OCI-LY7 (cell line): ENCODE measurements at regions of chr3 and their contacts with region 1.

Region 1: GRCh38 chr3:180912304-180913296 is at the start of gene FXR1:
- DNase-seq: peak; percentile 96
- H3K4me3 ChIP-seq: peak within 1 kb of the TSS; percentile 98
- H3K27ac ChIP-seq: peak within 1 kb of the TSS; percentile 82
- H3K4me1 ChIP-seq: peaks cover 24% of the 10 kb centered on the region
- CTCF ChIP-seq: peak; percentile 72
- total RNA-seq, gene FXR1: 90.6 and 142 TPM in 2 replicates

Region 2: GRCh38 chr3:180989291-180990163 is 76.9 kb after region 1 on chr3 and contains the start of gene DNAJC19:
- CTCF ChIA-PET with region 1: interaction called, 3 read pairs
- POLR2A ChIA-PET with region 1: interaction called, 11 read pairs
- intact Hi-C with region 1: loop called (anchors 1 kb)
- DNase-seq: peak; percentile 96
- H3K4me3 ChIP-seq: peak within 1 kb of the TSS; percentile 76
- H3K27ac ChIP-seq: peak within 1 kb of the TSS; percentile 34
- H3K4me1 ChIP-seq: peaks cover 10% of the 10 kb centered on the region
- CTCF ChIP-seq: no peak
- total RNA-seq, gene DNAJC19: 29.8 and 58.6 TPM in 2 replicates

Region 3: GRCh38 chr3:181009225-181009624 is 96.6 kb after region 1 on chr3:
- CTCF ChIA-PET with region 1: no interaction called
- POLR2A ChIA-PET with region 1: no interaction called
- intact Hi-C with region 1: no loop called
- DNase-seq: no peak
- H3K4me3 ChIP-seq: no peak overlapping the region
- H3K27ac ChIP-seq: no peak overlapping the region
- H3K4me1 ChIP-seq: no peaks in the 10 kb centered on the region
- CTCF ChIP-seq: no peak

Region 4: GRCh38 chr3:181486141-181486885 is 573.7 kb after region 1 on chr3:
- CTCF ChIA-PET with region 1: no interaction called
- POLR2A ChIA-PET with region 1: no interaction called
- intact Hi-C with region 1: loop called (anchors 10 kb)
- DNase-seq: peak; percentile 7
- H3K4me3 ChIP-seq: no peak overlapping the region
- H3K27ac ChIP-seq: peak overlapping the region; percentile 89
- H3K4me1 ChIP-seq: peaks cover 61% of the 10 kb centered on the region
- CTCF ChIP-seq: no peak

Region 5: DNA sequence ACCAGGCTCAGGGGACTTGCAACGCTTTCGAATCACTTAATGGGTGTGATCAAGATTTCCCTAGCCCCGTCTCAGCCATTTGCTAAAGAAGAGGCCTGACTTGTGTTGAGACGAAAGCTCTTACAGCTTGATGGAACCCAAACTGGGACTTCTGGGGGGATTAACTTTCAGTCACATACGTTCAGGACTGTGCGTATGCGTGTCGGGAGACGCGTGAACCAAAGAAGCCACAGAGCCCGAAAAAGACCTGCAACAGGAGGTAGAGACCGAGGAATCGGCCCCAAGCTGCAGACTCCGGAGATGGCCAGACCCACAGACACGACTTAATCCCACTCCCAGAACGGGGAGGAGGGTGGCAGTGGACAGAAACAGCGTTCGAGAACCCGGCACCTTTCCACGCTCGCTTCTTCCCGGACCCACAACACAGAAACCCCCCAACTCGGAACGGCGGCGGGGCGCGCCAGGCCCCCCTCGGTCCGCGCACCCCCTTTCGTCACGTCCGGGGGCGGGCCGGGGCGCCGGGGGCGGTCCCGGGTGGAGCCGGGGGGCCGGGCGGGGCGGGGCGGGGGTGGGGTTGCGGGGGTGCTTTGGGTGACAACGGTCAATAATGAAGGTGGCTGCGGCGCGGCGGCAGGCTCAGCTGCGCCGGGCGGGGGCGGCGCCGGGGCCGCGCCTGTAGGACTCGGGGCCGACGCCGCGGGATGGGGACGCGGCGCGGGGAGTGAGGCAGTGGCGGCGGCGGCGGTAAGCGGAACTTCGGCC is 1880.5 kb after region 1 on chr3 and contains the start of gene ATP11B:
- CTCF ChIA-PET with region 1: no interaction called
- POLR2A ChIA-PET with region 1: no interaction called
- intact Hi-C with region 1: loop called (anchors 10 kb)
- DNase-seq: peak; percentile 88
- H3K4me3 ChIP-seq: peak within 1 kb of the TSS; percentile 86
- H3K27ac ChIP-seq: peak within 1 kb of the TSS; percentile 72
- H3K4me1 ChIP-seq: peaks cover 37% of the 10 kb centered on the region
- CTCF ChIP-seq: no peak
- total RNA-seq, gene ATP11B: 55.6 and 58.6 TPM in 2 replicates